ENCODE measurements at regions of chr6 and their contacts with region 1.

Region 1: GRCh38 chr6:87808005-87808757 is 106.1 kb upstream of the AKIRIN2 start:
- DNase-seq: peak; percentile 16
- H3K4me3 Mint-ChIP-seq: no peak overlapping the region
- H3K27ac Mint-ChIP-seq: peak overlapping the region; percentile 50
- H3K4me1 Mint-ChIP-seq: peaks cover 16% of the 10 kb centered on the region
- H3K27me3 Mint-ChIP-seq: peaks cover 20% of the 10 kb centered on the region

Region 2: GRCh38 chr6:87407901-87408720 is 400.1 kb before region 1 on chr6 and contains the start of gene CFAP206:
- CTCF ChIA-PET with region 1: no interaction called
- intact Hi-C with region 1: loop called (anchors 5 kb)
- DNase-seq: peak; percentile 81
- H3K4me3 Mint-ChIP-seq: peak within 1 kb of the TSS; percentile 84
- H3K27ac Mint-ChIP-seq: no peak within 1 kb of the TSS
- H3K4me1 Mint-ChIP-seq: no peaks in the 10 kb centered on the region
- H3K27me3 Mint-ChIP-seq: peaks cover 11% of the 10 kb centered on the region
- total RNA-seq, gene CFAP206: not detected

Region 3: DNA sequence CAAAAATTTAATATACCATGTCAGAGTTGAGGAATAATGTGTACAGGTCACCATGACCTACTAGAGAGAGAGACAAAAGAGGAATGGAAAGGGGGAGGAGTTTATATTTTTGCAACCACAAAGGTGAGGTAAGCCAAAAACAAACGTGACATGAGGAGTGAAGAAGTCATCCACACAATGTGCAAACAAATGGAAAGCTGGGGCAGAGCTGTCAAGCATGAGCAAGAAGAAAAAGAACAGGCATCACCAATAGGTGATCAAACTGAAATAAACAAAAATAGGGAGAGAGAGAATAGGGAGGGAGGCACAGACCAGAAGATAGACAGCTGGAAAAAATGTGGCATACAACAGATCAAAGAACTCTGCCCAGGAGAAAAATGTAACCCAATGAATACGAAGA is 233.9 kb before region 1 on chr6:
- CTCF ChIA-PET with region 1: no interaction called
- intact Hi-C with region 1: loop called (anchors 5 kb)
- DNase-seq: no peak
- H3K4me3 Mint-ChIP-seq: no peak overlapping the region
- H3K27ac Mint-ChIP-seq: peak overlapping the region; percentile 39
- H3K4me1 Mint-ChIP-seq: peaks cover 50% of the 10 kb centered on the region
- H3K27me3 Mint-ChIP-seq: no peaks in the 10 kb centered on the region

Region 4: GRCh38 chr6:87628881-87629280 is 179.3 kb before region 1 on chr6:
- CTCF ChIA-PET with region 1: no interaction called
- intact Hi-C with region 1: no loop called
- DNase-seq: no peak
- H3K4me3 Mint-ChIP-seq: no peak overlapping the region
- H3K27ac Mint-ChIP-seq: no peak overlapping the region
- H3K4me1 Mint-ChIP-seq: no peaks in the 10 kb centered on the region
- H3K27me3 Mint-ChIP-seq: no peaks in the 10 kb centered on the region

Region 5: GRCh38 chr6:87742106-87742505 is 66.1 kb before region 1 on chr6:
- CTCF ChIA-PET with region 1: interaction called, 5 read pairs
- intact Hi-C with region 1: loop called (anchors 1 kb)
- DNase-seq: peak; percentile 76
- H3K4me3 Mint-ChIP-seq: no peak overlapping the region
- H3K27ac Mint-ChIP-seq: no peak overlapping the region
- H3K4me1 Mint-ChIP-seq: peaks cover 26% of the 10 kb centered on the region
- H3K27me3 Mint-ChIP-seq: no peaks in the 10 kb centered on the region

Region 6: GRCh38 chr6:87791982-87792381 is 16.2 kb before region 1 on chr6:
- CTCF ChIA-PET with region 1: no interaction called
- intact Hi-C with region 1: no loop called
- DNase-seq: no peak
- H3K4me3 Mint-ChIP-seq: no peak overlapping the region
- H3K27ac Mint-ChIP-seq: no peak overlapping the region
- H3K4me1 Mint-ChIP-seq: no peaks in the 10 kb centered on the region
- H3K27me3 Mint-ChIP-seq: peaks cover under 1% of the 10 kb centered on the region

Region 7: GRCh38 chr6:87832025-87832825 is 24.0 kb after region 1 on chr6:
- CTCF ChIA-PET with region 1: interaction called, 3 read pairs
- intact Hi-C with region 1: loop called (anchors 1 kb)
- DNase-seq: no peak
- H3K4me3 Mint-ChIP-seq: peak overlapping the region; percentile 69
- H3K27ac Mint-ChIP-seq: peak overlapping the region; percentile 72
- H3K4me1 Mint-ChIP-seq: peaks cover 8% of the 10 kb centered on the region
- H3K27me3 Mint-ChIP-seq: no peaks in the 10 kb centered on the region

Region 8: DNA sequence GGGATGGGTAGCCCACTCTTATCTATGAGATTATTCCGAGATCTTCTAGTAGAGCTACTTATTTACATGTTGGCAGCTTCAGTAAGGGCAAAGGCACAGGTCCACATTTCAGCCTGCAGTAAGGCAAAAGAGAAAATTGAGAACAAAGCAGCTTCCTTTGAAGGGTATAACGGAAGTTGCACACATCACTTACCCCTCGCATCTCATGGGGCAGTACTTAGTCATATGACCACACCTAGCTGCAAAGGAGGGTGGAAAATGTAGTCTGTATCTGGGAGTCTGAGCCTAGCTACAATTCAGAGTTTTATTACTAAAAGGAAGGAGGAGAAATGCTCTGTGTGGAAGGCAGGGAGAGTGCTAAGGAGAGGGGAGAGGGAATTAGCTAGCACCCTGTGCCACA is 269.1 kb after region 1 on chr6:
- CTCF ChIA-PET with region 1: no interaction called
- intact Hi-C with region 1: no loop called
- DNase-seq: no peak
- H3K4me3 Mint-ChIP-seq: no peak overlapping the region
- H3K27ac Mint-ChIP-seq: no peak overlapping the region
- H3K4me1 Mint-ChIP-seq: no peaks in the 10 kb centered on the region
- H3K27me3 Mint-ChIP-seq: peaks cover 8% of the 10 kb centered on the region

Measured in activated naive CD4-positive, alpha-beta T cell treated with anti-CD3 and anti-CD28 coated beads for 36 hours (primary cell).